AG04449 (cell line): ENCODE measurements at regions of chr3 and their contacts with region 1.

Region 1: DNA sequence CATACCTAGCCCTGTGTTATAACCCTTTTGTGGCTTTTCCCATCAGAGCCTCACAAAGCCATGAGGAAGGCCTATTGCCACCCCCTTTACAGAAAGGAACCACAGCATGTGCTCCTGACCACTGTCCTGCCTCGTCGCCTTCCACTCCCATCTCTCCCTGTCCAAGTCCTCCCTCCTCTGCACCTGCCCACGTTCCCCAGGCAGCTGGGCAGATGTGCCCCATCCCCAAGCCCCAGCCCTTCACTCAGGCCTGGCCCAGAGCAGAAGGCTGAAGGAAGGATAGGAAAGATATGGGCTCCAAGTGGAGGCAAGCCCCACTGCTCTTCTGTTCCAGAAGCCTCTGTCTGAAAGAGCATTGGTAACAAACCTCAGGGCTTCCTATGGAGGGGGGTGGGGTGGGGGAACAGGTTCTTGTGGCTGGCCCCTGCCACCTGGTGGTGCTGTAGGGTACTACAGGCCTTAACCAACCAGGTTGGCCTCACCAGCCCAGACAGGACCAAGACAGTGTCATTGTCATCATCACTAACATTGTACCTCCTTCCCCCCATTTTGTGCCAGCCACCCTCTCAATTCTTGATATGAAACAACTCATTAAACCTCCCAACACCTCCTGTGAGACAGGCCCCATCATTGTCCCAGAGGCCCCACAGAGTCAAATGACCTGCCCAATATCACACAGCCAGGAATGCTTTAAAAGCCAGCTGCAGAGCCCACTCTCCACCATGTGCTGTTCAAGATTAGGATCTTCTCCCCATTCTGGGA is 10.0 kb downstream of the POC1A start:
- DNase-seq: peak; percentile 41
- H3K4me3 ChIP-seq: no peak overlapping the region
- CTCF ChIP-seq: peak; percentile 95

Region 2: GRCh38 chr3:52108302-52109232 is 35.6 kb before region 1 on chr3:
- CTCF ChIA-PET with region 1: interaction called, 10 read pairs
- POLR2A ChIA-PET with region 1: no interaction called
- DNase-seq: no peak
- H3K4me3 ChIP-seq: 0 out of 2 replicates have a peak overlapping the region, but pooled peaks have one; percentile 0
- CTCF ChIP-seq: peak; percentile 73

Region 3: DNA sequence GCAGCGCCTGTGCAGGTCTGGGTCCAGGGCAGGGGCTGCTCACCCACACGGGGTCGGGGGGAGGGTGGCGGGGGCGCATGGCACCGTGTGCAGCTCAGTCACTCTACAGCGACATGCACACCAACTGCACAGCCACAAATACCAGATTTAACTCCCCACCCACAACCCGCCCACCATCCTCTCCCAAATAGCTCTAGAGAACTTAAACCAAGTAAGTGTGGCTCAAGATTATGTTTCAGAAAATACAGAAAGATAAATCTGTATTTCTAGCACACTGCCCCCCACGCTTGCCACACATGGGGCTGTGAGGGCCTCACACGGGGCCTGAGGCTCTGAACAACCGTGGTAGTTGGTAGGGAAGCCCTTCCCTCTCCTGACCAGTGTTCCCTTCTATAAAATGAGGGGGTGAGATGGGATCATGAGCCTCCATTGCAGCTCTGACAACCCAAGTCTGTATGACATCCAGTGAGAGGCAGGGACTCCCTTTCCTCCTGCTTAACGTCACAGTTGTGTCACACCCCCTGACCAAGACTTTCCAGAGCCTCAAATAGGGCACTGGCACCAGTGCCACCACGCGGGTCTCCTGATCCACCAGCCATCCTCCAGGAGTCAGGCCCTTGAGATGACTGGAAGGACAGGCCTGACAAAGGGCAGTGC is 13.1 kb before region 1 on chr3:
- CTCF ChIA-PET with region 1: interaction called, 93 read pairs
- POLR2A ChIA-PET with region 1: no interaction called
- DNase-seq: no peak
- H3K4me3 ChIP-seq: no peak overlapping the region
- CTCF ChIP-seq: no peak

Region 4: DNA sequence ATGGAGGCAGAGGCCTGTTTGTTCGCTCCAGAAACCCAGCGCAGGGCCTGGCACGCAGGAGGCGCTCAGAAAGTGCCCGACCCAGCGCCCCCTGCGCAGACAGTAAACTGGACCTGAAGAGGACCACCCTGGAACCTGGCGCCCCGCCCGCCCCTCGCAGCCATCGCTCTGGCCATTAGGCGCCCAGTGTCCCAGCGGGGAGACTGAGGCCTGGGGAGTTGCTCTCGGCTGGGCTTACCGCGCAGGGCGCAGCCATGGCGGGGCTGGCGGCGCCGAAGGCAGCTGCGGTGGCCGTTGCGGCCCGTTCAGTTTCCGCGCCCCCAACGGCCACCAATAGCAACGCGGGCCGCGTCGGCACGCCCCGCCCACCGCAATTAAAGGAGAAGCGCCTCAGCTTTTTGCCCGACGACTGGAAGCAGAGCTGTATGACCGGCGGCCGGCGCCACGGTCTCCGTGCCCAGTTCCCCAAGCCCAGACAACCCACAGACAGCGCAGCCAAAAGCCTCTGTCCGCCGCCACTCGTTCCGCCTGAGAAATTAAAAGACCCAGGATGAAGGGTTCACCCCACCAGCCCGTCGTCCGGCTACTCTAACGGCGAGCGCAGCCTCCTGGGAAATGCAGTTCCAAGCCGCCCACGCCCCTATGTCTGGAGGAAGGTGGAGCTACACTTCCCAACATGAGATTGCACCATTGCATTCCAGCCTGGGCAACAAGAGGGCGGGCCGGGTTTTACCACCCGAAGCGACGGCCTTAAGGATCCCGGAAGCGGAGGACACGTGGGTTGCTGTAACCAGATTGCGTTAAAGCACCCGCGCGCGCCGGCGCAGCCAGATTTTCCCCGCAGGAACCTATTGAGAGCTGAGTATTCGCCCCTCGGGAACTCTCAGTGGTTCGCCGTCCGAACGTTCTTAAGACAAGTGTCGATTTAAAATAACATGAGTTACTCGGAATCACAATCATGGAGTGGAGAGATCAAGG is 10.2 kb after region 1 on chr3 and contains the start of gene POC1A:
- CTCF ChIA-PET with region 1: interaction called, 14 read pairs
- POLR2A ChIA-PET with region 1: no interaction called
- DNase-seq: peak; percentile 91
- H3K4me3 ChIP-seq: peak within 1 kb of the TSS; percentile 90
- CTCF ChIP-seq: no peak

Region 5: GRCh38 chr3:52210550-52211046 is 66.4 kb after region 1 on chr3:
- CTCF ChIA-PET with region 1: no interaction called
- POLR2A ChIA-PET with region 1: no interaction called
- DNase-seq: peak; percentile 19
- H3K4me3 ChIP-seq: no peak overlapping the region
- CTCF ChIP-seq: no peak